Dendritic cell treated with granulocyte-macrophage colony-stimulating factor and Interleukin-4, amounts not matched to agents 40 ng/mL and 50 ng/mL, for 4 days (primary cell): ENCODE measurements at regions of chr17 and their contacts with region 1.

Region 1: DNA sequence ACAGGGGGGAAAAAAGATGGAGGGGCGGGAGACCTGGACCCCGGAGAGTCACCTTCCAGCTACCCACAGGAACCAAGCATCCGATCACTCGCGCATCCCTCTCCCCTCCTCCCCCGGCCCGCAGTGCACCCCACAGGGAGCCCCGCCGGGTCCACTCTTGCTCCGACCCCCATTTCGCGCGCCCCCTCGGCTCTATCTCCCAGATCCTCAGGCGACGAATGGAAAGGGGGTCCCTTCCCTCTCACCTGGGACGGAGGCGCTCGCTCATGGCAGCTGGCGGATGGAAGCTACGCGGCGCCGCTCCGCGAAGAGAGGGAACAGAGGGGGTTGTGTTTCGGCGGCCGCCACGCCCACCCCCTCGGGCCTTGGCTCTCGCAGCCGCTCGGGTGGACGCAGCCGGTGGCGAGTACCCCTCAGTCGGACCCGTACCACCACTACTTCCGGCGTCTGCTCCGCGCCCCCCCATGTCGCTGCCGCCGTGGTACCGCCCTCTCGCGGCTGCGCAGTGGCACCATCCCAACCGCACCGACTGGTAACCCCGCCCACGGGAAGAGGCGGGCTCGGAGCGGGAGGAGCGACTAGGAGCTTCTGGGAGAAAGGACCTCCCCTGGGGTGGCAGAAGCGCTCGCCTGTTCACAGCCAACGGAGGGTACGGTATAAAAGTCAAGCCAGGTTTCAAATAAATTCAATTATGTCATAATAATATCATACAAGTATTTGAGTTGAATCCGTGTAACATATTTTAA is 29.7 kb downstream of the CPSF4L start:
- H3K4me3 Mint-ChIP-seq: peak overlapping the region; percentile 99
- H3K27ac Mint-ChIP-seq: peak overlapping the region; percentile 92
- H3K4me1 Mint-ChIP-seq: peaks cover 51% of the 10 kb centered on the region
- H3K27me3 Mint-ChIP-seq: no peaks in the 10 kb centered on the region

Region 2: GRCh38 chr17:72985881-72986720 is 245.9 kb before region 1 on chr17:
- intact Hi-C with region 1: loop called (anchors 5 kb)
- H3K4me3 Mint-ChIP-seq: no peak overlapping the region
- H3K27ac Mint-ChIP-seq: no peak overlapping the region
- H3K4me1 Mint-ChIP-seq: peaks cover 6% of the 10 kb centered on the region
- H3K27me3 Mint-ChIP-seq: no peaks in the 10 kb centered on the region

Region 3: DNA sequence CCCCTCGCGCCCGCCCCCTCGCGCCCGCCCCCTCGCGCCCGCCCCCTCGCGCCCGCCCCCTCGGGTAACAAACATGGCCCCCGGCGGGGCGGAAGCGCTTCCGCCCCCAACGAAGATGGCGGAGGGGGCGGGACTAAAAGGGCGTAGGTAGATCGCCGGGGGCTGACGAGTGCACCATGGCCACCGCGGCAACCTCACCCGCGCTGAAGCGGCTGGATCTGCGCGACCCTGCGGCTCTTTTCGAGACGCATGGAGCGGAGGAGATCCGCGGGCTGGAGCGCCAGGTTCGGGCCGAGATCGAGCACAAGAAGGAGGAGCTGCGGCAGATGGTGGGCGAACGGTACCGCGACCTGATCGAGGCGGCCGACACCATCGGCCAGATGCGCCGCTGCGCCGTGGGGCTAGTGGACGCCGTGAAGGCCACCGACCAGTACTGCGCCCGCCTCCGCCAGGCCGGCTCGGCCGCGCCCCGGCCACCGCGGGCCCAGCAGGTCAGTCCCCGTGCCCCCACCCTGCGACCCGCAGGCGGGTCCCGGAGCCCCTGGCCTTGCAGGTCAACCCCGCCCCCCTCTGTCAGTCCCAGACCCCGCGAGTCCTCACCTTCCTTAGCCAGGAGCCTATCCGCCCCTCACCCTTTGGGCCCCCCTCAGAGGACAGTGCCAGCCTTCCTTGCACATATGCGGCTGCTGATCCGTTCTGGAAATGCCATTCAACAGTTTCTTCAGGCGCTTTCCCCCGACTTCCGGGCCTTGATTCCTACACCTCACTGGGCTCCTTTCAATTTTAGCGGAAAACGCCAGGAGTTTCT is 38.9 kb before region 1 on chr17 and contains the start of gene COG1:
- intact Hi-C with region 1: loop called (anchors 2 kb)
- H3K4me3 Mint-ChIP-seq: peak within 1 kb of the TSS; percentile 99
- H3K27ac Mint-ChIP-seq: peak within 1 kb of the TSS; percentile 92
- H3K4me1 Mint-ChIP-seq: peaks cover 22% of the 10 kb centered on the region
- H3K27me3 Mint-ChIP-seq: no peaks in the 10 kb centered on the region